ENCODE measurements at regions of chr2 and their contacts with region 1.

Region 1: GRCh38 chr2:172102391-172103278 is at the start of gene DLX2:
- DNase-seq: peak; percentile 44
- H3K4me3 Mint-ChIP-seq: peak within 1 kb of the TSS; percentile 71
- H3K27ac Mint-ChIP-seq: peak within 1 kb of the TSS; percentile 82
- H3K4me1 Mint-ChIP-seq: peaks cover 52% of the 10 kb centered on the region
- H3K27me3 Mint-ChIP-seq: peaks cover 73% of the 10 kb centered on the region
- total RNA-seq, gene DLX2: 0.20 TPM in 1 of 2 replicates, not detected in the other

Region 2: DNA sequence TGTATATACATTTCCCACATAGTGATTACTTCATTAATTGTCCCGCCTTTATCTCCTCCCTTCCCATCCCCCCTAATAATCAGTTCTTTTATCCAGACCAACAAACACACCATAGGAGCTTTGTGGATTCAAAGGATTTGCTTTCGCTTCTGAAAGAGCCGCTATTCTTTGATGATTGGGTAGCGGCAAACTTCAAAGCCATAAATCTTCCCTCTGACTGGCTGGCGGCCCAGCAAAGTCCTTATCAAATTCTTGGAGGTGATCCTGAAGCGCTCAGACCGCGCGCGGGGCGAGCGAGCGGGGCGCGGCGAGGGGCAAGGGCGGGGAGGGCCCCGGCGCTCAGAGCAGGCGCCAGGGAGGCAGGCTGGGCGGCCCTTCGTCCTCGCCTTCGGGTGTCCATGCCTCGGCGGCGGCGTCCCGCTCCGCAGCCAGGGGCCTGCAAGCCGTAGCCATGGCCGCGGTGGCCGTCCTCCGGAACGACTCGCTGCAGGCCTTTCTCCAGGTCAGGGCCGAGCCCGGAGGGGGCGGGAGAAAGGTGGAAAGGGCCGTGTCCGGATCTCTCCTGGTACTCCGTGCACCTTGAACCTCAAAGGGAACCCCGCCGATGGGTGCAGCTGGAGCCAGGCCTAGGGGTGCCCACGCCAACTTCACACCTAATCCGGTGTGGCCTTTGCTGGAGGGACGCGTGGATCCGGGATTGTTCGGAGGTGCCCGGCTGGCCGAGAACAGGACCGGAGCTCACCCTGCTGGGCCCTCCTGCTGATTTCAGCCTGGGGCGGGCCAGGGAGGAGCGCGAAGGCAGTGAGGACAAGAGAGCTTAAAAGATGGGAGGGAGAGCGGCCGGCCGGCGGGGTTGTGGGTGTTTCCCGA is 1387.3 kb before region 1 on chr2 and contains the start of gene SP5:
- intact Hi-C with region 1: loop called (anchors 5 kb)
- DNase-seq: peak; percentile 13
- H3K4me3 Mint-ChIP-seq: peak within 1 kb of the TSS; percentile 78
- H3K27ac Mint-ChIP-seq: peak within 1 kb of the TSS; percentile 61
- H3K4me1 Mint-ChIP-seq: peaks cover 31% of the 10 kb centered on the region
- H3K27me3 Mint-ChIP-seq: peaks cover 68% of the 10 kb centered on the region
- total RNA-seq, gene SP5: not detected in 2 replicates

Region 3: GRCh38 chr2:171598713-171599319 is 503.8 kb before region 1 on chr2:
- intact Hi-C with region 1: loop called (anchors 2 kb)
- DNase-seq: peak; percentile 26
- H3K4me3 Mint-ChIP-seq: no peak overlapping the region
- H3K27ac Mint-ChIP-seq: no peak overlapping the region
- H3K4me1 Mint-ChIP-seq: peaks cover 4% of the 10 kb centered on the region
- H3K27me3 Mint-ChIP-seq: peaks cover 11% of the 10 kb centered on the region

Region 4: DNA sequence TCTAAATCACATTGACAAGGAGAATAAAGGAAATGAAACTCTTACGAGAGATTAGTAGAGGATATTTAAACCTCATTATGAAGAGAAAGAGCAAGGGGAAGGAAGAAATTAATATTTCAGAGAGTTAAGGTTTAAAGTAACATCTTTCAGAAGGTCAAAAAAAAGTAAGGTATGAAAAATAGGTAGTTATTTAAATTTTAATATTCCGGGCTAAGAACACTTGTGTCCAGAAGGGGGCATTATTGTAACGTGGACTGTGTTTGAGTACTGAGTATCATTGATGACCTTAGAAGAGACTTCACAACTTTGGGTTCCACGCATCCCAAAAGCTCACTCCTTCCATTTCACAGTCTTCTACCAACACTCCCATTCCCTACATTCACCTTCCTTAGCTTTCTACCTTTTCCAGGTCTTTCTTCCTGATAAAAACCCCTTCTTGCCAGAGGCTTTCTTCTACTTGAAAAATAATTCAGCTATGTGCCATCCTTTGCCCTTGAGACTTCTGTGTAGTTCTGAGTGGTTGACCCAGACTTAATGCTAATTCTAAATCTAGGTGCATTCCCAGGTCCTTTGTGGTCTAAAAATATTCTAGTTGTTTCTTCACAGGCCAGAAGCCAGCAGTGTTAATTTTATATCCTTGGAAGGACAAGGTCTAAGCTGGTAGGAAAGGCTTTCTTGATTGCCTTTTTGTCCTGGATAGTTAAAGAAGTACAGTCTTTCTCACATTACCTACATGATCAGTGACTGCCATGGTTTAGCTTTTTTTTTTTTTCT is 398.9 kb before region 1 on chr2:
- intact Hi-C with region 1: loop called (anchors 1 kb)
- DNase-seq: no peak
- H3K4me3 Mint-ChIP-seq: no peak overlapping the region
- H3K27ac Mint-ChIP-seq: no peak overlapping the region
- H3K4me1 Mint-ChIP-seq: peaks cover 12% of the 10 kb centered on the region
- H3K27me3 Mint-ChIP-seq: no peaks in the 10 kb centered on the region

Region 5: GRCh38 chr2:171811245-171811628 is 291.4 kb before region 1 on chr2:
- intact Hi-C with region 1: loop called (anchors 10 kb)
- DNase-seq: no peak
- H3K4me3 Mint-ChIP-seq: no peak overlapping the region
- H3K27ac Mint-ChIP-seq: no peak overlapping the region
- H3K4me1 Mint-ChIP-seq: no peaks in the 10 kb centered on the region
- H3K27me3 Mint-ChIP-seq: no peaks in the 10 kb centered on the region

Region 6: GRCh38 chr2:172072303-172072702 is 30.3 kb before region 1 on chr2:
- intact Hi-C with region 1: loop called (anchors 5 kb)
- DNase-seq: no peak
- H3K4me3 Mint-ChIP-seq: no peak overlapping the region
- H3K27ac Mint-ChIP-seq: no peak overlapping the region
- H3K4me1 Mint-ChIP-seq: no peaks in the 10 kb centered on the region
- H3K27me3 Mint-ChIP-seq: peaks cover 36% of the 10 kb centered on the region

Region 7: DNA sequence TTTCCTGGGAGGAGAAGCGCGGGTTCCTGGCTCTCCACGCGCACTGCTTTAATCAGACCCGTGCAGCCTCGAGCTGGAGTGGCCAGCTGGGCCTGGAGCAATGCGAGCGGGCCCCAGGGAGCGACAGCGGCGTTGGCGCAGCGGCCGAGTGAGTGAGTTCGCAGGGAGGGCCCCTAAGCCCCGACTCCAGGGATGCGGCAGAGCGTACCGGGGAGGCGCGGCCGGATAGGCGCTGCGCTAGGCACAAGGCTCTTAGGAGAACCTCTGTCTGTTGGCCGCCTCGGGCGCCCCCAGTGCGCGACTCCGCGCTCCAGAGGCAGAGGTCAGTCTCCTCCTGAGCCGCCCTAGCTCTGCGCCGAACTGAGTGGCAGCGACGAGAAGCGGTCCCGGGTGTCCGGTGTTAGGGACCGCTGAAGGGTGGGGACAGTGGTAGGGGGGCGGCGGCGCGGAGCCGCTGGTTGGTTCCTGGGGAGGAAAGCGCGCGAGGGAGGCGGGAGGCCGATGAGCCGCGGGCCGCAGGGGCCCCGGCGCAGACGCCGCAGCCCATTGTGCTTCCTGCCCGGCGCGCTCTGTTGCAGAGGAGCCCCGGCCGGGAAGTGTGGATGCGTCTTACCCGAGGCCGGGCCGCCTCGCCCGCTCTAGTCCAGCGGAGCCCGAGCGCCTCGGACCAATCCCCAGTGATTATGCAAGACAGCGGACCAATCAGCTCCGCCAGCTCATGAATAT is 17.7 kb before region 1 on chr2:
- intact Hi-C with region 1: loop called (anchors 1 kb)
- DNase-seq: no peak
- H3K4me3 Mint-ChIP-seq: peak overlapping the region; percentile 67
- H3K27ac Mint-ChIP-seq: peak overlapping the region; percentile 75
- H3K4me1 Mint-ChIP-seq: peaks cover 49% of the 10 kb centered on the region
- H3K27me3 Mint-ChIP-seq: peaks cover 89% of the 10 kb centered on the region